H1 (cell line): ENCODE measurements at regions of chr14 and their contacts with region 1.

Region 1: DNA sequence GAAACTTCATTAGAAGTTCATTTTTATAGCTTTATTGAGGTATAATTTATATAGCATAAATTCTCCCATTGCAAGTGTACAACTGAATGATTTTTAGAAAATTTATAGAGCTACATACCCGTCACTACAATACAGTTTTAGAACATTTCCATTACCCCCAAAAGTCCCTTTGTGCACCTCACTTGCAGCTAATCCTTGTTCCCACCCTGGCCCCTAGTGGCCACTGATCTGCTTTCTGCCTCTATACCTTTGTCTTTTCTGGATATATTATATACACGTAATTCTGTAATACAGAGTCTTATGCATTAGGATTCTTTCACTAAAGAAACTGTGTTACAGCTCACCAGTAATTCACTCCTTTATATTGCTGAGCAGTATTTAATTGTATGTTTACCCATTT is 145.1 kb upstream of the DIO2 start:
- DNase-seq: no peak
- H3K4me3 ChIP-seq: no peak overlapping the region
- H3K27ac ChIP-seq: no peak overlapping the region
- H3K4me1 ChIP-seq: no peaks in the 10 kb centered on the region
- H3K27me3 ChIP-seq: peaks cover 0 to 1% (median 0%) of the 10 kb centered on the region in 4 experiments; a peak in 1 of 7 replicates
- CTCF ChIP-seq: peak; percentile 45 to 61 (median 49)
- EP300 ChIP-seq: no peak
- POLR2A ChIP-seq: no peak
- RAD21 ChIP-seq: peak; percentile 67 to 71

Region 2: DNA sequence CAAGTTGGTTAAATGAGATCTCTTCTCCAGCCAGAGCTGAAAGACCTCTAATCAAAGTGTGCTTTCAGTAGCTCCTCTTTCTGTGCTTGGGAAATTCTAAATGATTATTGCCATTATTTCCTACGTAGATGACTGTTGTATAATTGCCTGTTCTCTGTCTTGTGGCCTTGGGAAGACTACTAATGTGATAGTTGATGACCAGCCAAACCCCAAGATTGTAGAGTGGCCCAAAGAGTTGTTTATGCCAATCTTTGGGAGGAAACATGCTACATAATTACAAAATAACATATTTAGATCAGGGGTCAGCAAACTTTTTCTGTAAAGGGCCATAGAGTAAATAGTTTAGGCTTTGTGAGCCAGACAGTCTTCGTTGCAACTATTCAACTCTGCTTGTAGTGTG is 10.0 kb before region 1 on chr14:
- CTCF ChIA-PET with region 1: interaction called, 23 read pairs
- POLR2A ChIA-PET with region 1: no interaction called
- DNase-seq: no peak
- H3K4me3 ChIP-seq: no peak overlapping the region
- H3K27ac ChIP-seq: no peak overlapping the region
- H3K4me1 ChIP-seq: no peaks in the 10 kb centered on the region
- H3K27me3 ChIP-seq: no peaks in the 10 kb centered on the region
- CTCF ChIP-seq: no peak
- EP300 ChIP-seq: no peak
- POLR2A ChIP-seq: no peak
- RAD21 ChIP-seq: no peak

Region 3: GRCh38 chr14:80504781-80505180 is 148.4 kb after region 1 on chr14:
- CTCF ChIA-PET with region 1: no interaction called
- POLR2A ChIA-PET with region 1: no interaction called
- DNase-seq: no peak
- H3K4me3 ChIP-seq: no peak overlapping the region
- H3K27ac ChIP-seq: no peak overlapping the region
- H3K4me1 ChIP-seq: no peaks in the 10 kb centered on the region
- H3K27me3 ChIP-seq: no peaks in the 10 kb centered on the region
- CTCF ChIP-seq: no peak
- EP300 ChIP-seq: no peak
- POLR2A ChIP-seq: no peak
- RAD21 ChIP-seq: no peak

Region 4: DNA sequence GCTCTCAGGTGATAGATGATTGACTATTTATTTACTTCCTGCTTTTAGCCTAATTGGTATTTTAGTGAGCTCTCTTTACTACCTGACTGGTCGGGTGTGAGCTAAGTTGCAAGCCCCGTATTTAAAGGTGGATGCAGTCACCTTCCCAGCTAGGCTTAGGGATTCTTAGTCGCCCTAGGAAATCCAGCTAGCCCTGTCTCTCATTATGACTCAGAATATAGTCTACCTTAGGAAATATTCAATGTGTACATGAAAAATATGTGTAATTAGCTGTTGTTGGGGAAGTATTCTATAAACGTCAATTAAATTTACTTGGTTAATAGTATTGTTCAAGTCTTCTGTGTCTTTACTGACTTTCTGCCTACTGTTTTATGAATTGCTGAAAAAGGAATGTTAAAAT is 161.8 kb after region 1 on chr14:
- CTCF ChIA-PET with region 1: no interaction called
- POLR2A ChIA-PET with region 1: no interaction called
- DNase-seq: no peak
- H3K4me3 ChIP-seq: no peak overlapping the region
- H3K27ac ChIP-seq: no peak overlapping the region
- H3K4me1 ChIP-seq: no peaks in the 10 kb centered on the region
- H3K27me3 ChIP-seq: no peaks in the 10 kb centered on the region
- CTCF ChIP-seq: no peak
- EP300 ChIP-seq: no peak
- POLR2A ChIP-seq: no peak
- RAD21 ChIP-seq: no peak

Region 5: GRCh38 chr14:80560800-80561657 is 204.6 kb after region 1 on chr14:
- CTCF ChIA-PET with region 1: no interaction called
- POLR2A ChIA-PET with region 1: no interaction called
- DNase-seq: no peak
- H3K4me3 ChIP-seq: no peak overlapping the region
- H3K27ac ChIP-seq: no peak overlapping the region
- H3K4me1 ChIP-seq: peaks cover 0 to 3% (median 0%) of the 10 kb centered on the region in 4 experiments; a peak in 1 of 7 replicates
- H3K27me3 ChIP-seq: no peaks in the 10 kb centered on the region
- CTCF ChIP-seq: no peak
- EP300 ChIP-seq: no peak
- POLR2A ChIP-seq: no peak
- RAD21 ChIP-seq: no peak